ENCODE measurements at regions of chr10 and their contacts with region 1.

Region 1: GRCh38 chr10:24503461-24504320 is 220.0 kb downstream of the ARHGAP21 start:
- DNase-seq: peak in 2 of 5 donors; percentile 23 to 46
- ATAC-seq: peak in 2 of 4 donors; percentile 52 to 54
- H3K4me3 ChIP-seq: no peak overlapping the region
- H3K27ac ChIP-seq: peak overlapping the region in 1 of 12 donors; percentile 6
- H3K4me1 ChIP-seq: peaks cover 0 to 4% (median 0%) of the 10 kb centered on the region in 12 donors
- H3K27me3 ChIP-seq: no peaks in the 10 kb centered on the region
- CTCF ChIP-seq: peak; percentile 40 to 70 (median 58)
- POLR2A ChIP-seq: no peak

Region 2: GRCh38 chr10:23158370-23158769 is 1345.3 kb before region 1 on chr10:
- intact Hi-C with region 1: loop called in 1 of 10 experiments (anchors 5 kb)
- DNase-seq: no peak
- ATAC-seq: peak in 3 of 4 donors; percentile 70 to 80 (median 74)
- H3K4me3 ChIP-seq: no peak overlapping the region
- H3K27ac ChIP-seq: no peak overlapping the region
- H3K4me1 ChIP-seq: peaks cover 0 to 5% (median 0%) of the 10 kb centered on the region in 12 donors
- H3K27me3 ChIP-seq: peaks cover 0 to 26% (median 5%) of the 10 kb centered on the region in 9 donors
- CTCF ChIP-seq: peak; percentile 62 to 83 (median 74)
- POLR2A ChIP-seq: no peak

Region 3: DNA sequence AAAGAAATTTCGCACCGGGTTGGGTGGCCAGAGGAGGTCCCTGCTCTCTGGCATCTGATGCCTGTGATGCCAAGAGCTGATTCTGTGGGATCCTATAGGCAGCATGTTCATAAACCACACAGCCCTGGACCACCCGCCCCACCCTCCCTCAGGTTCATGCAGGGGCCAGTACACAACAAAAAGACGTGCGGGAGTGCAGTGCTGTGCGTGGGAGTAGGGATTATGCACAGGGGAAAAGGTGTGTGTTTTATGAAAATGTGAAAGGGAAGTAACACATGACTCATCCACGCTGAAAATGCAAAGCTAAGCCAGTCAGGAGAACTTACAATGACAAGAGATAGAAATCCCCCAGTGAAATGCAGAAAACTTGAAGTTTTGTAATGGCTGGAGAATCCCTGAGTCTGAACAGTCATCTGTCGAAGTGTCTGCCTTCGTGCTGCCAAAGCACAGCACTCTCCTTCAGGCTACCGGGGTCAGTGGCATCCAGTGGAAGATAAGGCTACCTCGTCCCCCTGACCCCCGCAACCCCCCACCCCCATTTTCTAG is 293.7 kb before region 1 on chr10:
- intact Hi-C with region 1: loop called in 3 of 10 experiments (anchors 5 to 10 kb)
- DNase-seq: peak in 4 of 5 donors; percentile 17 to 44 (median 29)
- ATAC-seq: peak in 3 of 4 donors; percentile 10 to 36 (median 28)
- H3K4me3 ChIP-seq: peak overlapping the region; percentile 30 to 74 (median 63)
- H3K27ac ChIP-seq: peak overlapping the region in 11 of 12 donors; percentile 86 to 93 (median 88)
- H3K4me1 ChIP-seq: peaks cover 4 to 77% (median 54%) of the 10 kb centered on the region in 12 donors
- H3K27me3 ChIP-seq: no peaks in the 10 kb centered on the region
- CTCF ChIP-seq: no peak
- POLR2A ChIP-seq: no peak

Region 4: GRCh38 chr10:24383681-24384106 is 120.0 kb before region 1 on chr10:
- intact Hi-C with region 1: loop called in 1 of 10 experiments (anchors 10 kb)
- DNase-seq: peak; percentile 87 to 91 (median 90)
- ATAC-seq: peak; percentile 79 to 96 (median 94)
- H3K4me3 ChIP-seq: no peak overlapping the region
- H3K27ac ChIP-seq: peak overlapping the region; percentile 18 to 78 (median 66)
- H3K4me1 ChIP-seq: peaks cover 0 to 41% (median 24%) of the 10 kb centered on the region in 12 donors
- H3K27me3 ChIP-seq: no peaks in the 10 kb centered on the region
- CTCF ChIP-seq: peak; percentile 30 to 74 (median 54)
- POLR2A ChIP-seq: no peak

Region 5: DNA sequence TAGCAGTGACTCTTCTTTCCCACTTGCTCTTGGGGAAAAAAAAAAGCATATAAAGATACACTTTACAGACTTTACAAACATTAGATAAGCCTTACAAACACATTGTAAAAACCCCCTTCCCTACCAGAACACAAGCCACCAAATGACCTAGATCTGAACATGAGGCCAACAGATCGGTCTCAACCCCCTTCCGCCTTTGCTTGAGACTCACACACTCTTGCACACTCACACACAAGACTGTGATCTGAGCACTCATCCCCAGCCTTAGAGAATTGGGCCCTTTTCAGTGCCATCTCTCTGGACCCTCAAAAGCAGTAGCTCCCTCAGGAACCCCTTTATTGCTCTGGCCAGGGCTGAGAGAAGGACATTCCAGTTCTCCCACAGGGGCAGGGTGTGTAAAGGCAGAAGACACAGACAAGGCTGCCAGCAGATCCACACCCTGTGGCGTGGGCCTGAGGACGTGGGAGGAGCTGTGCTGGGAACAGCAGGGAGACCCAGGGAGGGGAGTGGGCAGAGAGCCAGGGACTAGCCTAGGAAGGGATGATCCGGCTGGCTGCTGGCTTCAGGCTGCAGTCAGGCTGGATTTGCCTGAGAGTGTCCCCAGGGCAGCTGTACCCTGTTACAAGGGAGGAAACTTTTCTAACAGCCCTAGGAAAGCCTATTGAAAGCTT is 88.1 kb before region 1 on chr10:
- intact Hi-C with region 1: loop called in 1 of 10 experiments (anchors 10 kb)
- DNase-seq: peak; percentile 85 to 95 (median 91)
- ATAC-seq: peak; percentile 90 to 95 (median 92)
- H3K4me3 ChIP-seq: no peak overlapping the region
- H3K27ac ChIP-seq: peak overlapping the region; percentile 2 to 70 (median 50)
- H3K4me1 ChIP-seq: peaks cover 2 to 34% (median 18%) of the 10 kb centered on the region in 12 donors
- H3K27me3 ChIP-seq: no peaks in the 10 kb centered on the region
- CTCF ChIP-seq: no peak
- POLR2A ChIP-seq: no peak

Region 6: GRCh38 chr10:25357269-25357668 is 853.6 kb after region 1 on chr10:
- intact Hi-C with region 1: no loop called
- DNase-seq: no peak
- ATAC-seq: no peak
- H3K4me3 ChIP-seq: no peak overlapping the region
- H3K27ac ChIP-seq: no peak overlapping the region
- H3K4me1 ChIP-seq: no peaks in the 10 kb centered on the region
- H3K27me3 ChIP-seq: no peaks in the 10 kb centered on the region
- CTCF ChIP-seq: no peak
- POLR2A ChIP-seq: no peak

Measured in heart left ventricle (tissue), 16 donors.